GM23248 (cell line): ENCODE measurements at regions of chr1 and their contacts with region 1.

Region 1: GRCh38 chr1:25796811-25797458 is 3.1 kb upstream of the SELENON start:
- DNase-seq: peak; percentile 81
- H3K4me3 ChIP-seq: no peak overlapping the region
- H3K27ac ChIP-seq: no peak overlapping the region
- H3K4me1 ChIP-seq: peaks cover 6% of the 10 kb centered on the region; the same call in 1 of the 2 replicates
- H3K27me3 ChIP-seq: no peaks in the 10 kb centered on the region

Region 2: DNA sequence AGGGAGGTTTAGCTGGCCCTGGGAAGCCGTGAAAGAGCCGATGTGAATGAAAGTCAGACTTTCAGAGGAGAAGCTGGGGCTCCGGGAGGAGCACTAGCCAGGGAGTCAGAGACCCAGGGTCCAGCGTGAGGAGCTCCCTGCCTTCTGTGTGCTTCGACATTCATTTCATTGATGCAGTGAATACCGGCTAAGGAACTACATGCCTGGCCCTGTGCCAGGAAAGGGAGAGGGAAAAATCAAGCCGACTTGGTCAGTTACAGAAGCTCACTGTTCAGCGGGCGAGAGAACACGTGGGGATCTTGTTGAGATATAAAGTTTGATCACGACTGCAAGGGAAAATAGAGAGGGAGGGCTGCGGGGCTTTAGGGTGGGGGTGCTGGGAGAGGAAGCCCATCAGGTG is 790.2 kb before region 1 on chr1:
- in situ Hi-C with region 1: no loop called
- DNase-seq: no peak
- H3K4me3 ChIP-seq: no peak overlapping the region
- H3K27ac ChIP-seq: no peak overlapping the region
- H3K4me1 ChIP-seq: peaks cover 5% of the 10 kb centered on the region; the same call in 1 of the 2 replicates
- H3K27me3 ChIP-seq: peaks cover 14% of the 10 kb centered on the region

Region 3: GRCh38 chr1:25616095-25616986 is 180.6 kb before region 1 on chr1 and contains the start of gene MAN1C1:
- in situ Hi-C with region 1: loop called (anchors 10 kb)
- DNase-seq: peak; percentile 88
- H3K4me3 ChIP-seq: peak within 1 kb of the TSS; percentile 72
- H3K27ac ChIP-seq: no peak within 1 kb of the TSS
- H3K4me1 ChIP-seq: no peaks in the 10 kb centered on the region
- H3K27me3 ChIP-seq: peaks cover 25% of the 10 kb centered on the region
- total RNA-seq, gene MAN1C1: 0.51 and 1.1 TPM in 2 replicates

Region 4: DNA sequence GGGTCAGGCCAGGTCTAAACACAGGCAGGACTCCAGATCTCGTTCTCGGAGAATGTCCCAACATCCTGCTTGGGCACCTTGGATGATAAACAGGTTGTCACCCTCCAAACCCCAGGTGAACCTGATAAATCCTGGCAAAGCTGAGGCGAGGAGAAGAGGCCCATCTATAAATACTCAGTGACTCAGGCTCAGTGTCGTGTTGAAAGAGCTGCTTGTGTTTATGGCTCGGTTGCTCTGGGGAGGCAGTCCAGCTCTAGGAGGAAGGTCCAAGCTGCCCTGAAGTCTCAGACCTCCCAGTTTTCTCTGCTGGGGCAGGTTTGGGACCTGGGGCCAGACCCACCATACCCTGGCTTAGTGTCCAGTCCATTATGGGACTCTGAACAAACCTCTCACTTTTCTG is 286.3 kb after region 1 on chr1:
- in situ Hi-C with region 1: no loop called
- DNase-seq: peak; percentile 64
- H3K4me3 ChIP-seq: no peak overlapping the region
- H3K27ac ChIP-seq: no peak overlapping the region
- H3K4me1 ChIP-seq: no peaks in the 10 kb centered on the region
- H3K27me3 ChIP-seq: peaks cover 5% of the 10 kb centered on the region